Gastrocnemius medialis (tissue), 4 donors: ENCODE measurements at regions of chr2 and their contacts with region 1.

Region 1: DNA sequence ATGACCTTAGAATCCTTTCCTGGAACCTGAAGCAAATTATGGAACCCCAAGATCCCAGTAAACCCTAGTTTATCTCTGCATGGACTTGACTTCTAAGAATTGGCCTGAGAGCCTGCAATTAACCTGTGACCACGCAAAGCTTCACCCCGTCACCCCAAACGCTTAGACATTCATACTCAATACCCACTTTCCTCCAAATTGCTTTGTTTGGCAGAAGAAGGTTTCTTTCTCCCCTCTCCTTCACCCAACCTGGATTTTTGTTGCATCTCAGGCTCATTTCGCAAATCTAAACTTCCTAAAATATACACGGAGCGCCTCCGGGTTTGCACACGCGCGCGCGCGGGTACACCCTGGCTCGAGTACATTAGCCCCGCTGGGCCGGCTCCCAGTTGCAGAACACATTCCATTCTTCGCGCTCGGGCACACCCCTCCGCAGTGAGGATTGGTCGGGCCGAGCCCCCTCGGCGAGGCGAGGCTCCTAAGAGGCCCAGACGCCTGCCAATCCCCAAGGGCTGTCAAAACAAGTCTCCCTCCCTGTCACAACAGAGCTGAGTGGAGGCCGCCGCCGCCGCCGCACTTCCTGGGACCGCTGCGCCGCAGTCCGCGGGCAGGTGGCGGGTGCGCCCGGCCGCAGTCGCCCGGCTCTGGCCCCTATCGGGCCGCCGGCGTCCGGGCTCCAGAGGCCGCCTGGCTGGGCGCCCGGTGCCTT is at the start of gene PLCL1:
- DNase-seq: peak; percentile 94 to 97
- ATAC-seq: peak; percentile 86 to 89
- H3K4me3 ChIP-seq: peak within 1 kb of the TSS; percentile 54 to 93 (median 76)
- H3K27ac ChIP-seq: peak within 1 kb of the TSS; percentile 83 to 91 (median 88)
- H3K4me1 ChIP-seq: peaks cover 55 to 67% of the 10 kb centered on the region in 2 donors
- H3K27me3 ChIP-seq: no peaks in the 10 kb centered on the region
- CTCF ChIP-seq: peak in 4 of 5 experiments; percentile 10 to 27 (median 22)
- POLR2A ChIP-seq: peak; percentile 82 to 94
- total RNA-seq, gene PLCL1: 5.9 to 10.7 (median 9.8) TPM

Region 2: DNA sequence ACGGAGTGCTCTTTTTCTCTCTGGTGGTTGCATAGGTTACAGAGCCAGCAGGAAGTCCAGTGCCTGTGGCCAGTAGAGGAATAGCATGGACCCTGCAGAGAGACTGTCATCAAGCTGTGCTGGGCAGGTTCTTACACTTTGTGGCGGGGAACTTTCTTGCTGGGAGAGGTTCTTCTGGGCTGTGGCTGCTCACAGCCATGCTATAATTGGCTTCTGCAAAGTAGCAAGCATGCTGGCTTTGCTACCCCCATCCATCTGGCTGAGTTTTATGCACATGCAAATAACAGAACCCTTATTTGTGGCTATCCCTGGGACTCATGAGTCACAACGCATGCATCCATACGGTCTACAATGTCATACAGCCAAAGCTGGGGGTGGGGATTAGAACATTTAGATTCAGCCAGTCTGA is 69.1 kb after region 1 on chr2:
- in situ Hi-C with region 1: no loop called
- intact Hi-C with region 1: loop called (anchors 5 kb)
- DNase-seq: no peak
- ATAC-seq: peak; percentile 57 to 77
- H3K4me3 ChIP-seq: no peak overlapping the region
- H3K27ac ChIP-seq: peak overlapping the region in 1 of 4 donors; percentile 45
- H3K4me1 ChIP-seq: peaks cover 25 to 51% of the 10 kb centered on the region in 2 donors
- H3K27me3 ChIP-seq: no peaks in the 10 kb centered on the region
- CTCF ChIP-seq: no peak
- POLR2A ChIP-seq: no peak

Region 3: DNA sequence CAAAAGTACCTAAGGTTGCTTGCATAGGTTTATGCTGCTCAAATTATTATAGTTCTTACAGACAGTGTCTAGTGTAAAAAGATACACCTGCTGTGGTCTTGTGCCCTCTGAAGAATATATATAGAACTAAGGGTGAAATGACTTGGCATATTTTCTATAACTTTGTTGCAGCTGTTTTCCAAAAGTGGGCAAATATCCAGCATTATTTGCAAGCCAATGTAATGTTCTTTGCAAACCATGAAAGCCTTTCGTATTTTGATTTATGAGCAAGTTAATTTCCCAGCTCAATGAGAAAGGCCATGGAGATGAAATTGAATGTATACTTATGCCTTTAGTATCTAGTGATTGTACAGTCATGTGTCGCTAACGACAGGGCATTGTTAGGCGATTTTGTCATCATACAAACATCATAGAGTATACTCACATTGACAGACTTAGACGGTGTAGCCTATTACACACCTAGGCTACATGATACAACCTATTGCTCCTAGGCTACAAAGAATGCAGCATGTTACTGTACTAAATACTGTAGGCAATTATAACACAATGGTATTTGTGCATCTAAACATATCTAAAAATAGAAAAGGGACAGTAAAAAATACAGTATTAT is 116.5 kb after region 1 on chr2:
- in situ Hi-C with region 1: no loop called
- intact Hi-C with region 1: loop called (anchors 5 kb)
- DNase-seq: no peak
- ATAC-seq: peak; percentile 62 to 70
- H3K4me3 ChIP-seq: peak overlapping the region in 1 of 4 donors; percentile 27
- H3K27ac ChIP-seq: peak overlapping the region; percentile 63 to 90 (median 78)
- H3K4me1 ChIP-seq: peaks cover 33 to 51% of the 10 kb centered on the region in 2 donors
- H3K27me3 ChIP-seq: no peaks in the 10 kb centered on the region
- CTCF ChIP-seq: no peak
- POLR2A ChIP-seq: no peak

Region 4: GRCh38 chr2:198053776-198054698 is 249.8 kb after region 1 on chr2:
- in situ Hi-C with region 1: no loop called
- intact Hi-C with region 1: loop called (anchors 10 kb)
- DNase-seq: no peak
- ATAC-seq: peak in 1 of 2 donors; percentile 35
- H3K4me3 ChIP-seq: no peak overlapping the region
- H3K27ac ChIP-seq: peak overlapping the region in 3 of 4 donors; percentile 18 to 53 (median 33)
- H3K4me1 ChIP-seq: peaks cover 9 to 29% of the 10 kb centered on the region in 2 donors
- H3K27me3 ChIP-seq: no peaks in the 10 kb centered on the region
- CTCF ChIP-seq: peak in 3 of 5 experiments; percentile 5 to 35 (median 34)
- POLR2A ChIP-seq: no peak

Region 5: DNA sequence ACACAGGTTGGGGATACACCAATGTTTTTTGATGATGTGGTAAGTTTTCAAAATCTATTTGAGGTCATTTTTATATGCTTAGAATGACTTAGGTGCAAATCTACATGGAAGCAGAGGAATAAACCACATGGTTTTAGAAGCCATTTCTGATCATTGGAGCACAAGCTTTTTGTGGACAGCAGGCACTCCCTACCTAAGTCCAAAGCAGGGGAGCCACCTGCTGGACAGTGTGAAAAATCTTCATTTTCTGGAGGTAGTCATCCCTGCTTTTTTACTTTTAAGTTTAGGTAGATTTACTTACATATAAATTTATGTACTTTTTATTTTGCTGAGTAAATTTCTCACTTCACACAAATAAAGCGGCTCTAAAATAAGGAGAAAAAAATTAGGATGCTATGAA is 323.4 kb after region 1 on chr2:
- in situ Hi-C with region 1: loop called in 3 of 4 experiments (anchors 5 to 10 kb)
- intact Hi-C with region 1: loop called (anchors 1 kb)
- DNase-seq: peak; percentile 28 to 37
- ATAC-seq: peak; percentile 69 to 87
- H3K4me3 ChIP-seq: no peak overlapping the region
- H3K27ac ChIP-seq: no peak overlapping the region
- H3K4me1 ChIP-seq: peaks cover 6 to 17% of the 10 kb centered on the region in 2 donors
- H3K27me3 ChIP-seq: no peaks in the 10 kb centered on the region
- CTCF ChIP-seq: peak; percentile 64 to 80 (median 71)
- POLR2A ChIP-seq: no peak

Region 6: DNA sequence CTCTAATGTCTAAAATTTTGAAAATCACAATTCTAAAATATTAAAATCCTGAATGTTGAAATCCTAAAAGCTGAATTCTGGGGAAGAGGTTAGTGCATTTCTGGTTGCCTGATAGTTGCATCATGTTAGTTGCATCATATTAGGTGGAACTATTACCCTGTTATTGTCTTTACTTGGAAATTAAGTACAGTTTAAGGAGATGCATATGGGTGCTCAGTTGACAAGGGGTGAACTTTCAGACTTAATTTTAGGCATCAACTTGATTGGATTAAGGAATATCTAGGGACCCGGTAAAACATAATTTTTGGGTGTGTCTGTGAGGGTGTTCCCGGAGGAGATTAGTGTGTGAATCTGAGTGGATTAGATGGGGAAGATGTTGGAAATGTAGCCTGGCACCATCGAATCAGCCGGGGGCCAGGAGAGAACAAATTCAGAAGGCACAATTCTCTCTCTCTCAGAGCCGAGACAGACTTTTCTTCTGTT is 410.0 kb after region 1 on chr2:
- in situ Hi-C with region 1: no loop called
- intact Hi-C with region 1: no loop called
- DNase-seq: no peak
- ATAC-seq: no peak
- H3K4me3 ChIP-seq: no peak overlapping the region
- H3K27ac ChIP-seq: no peak overlapping the region
- H3K4me1 ChIP-seq: no peaks in the 10 kb centered on the region
- H3K27me3 ChIP-seq: no peaks in the 10 kb centered on the region
- CTCF ChIP-seq: no peak
- POLR2A ChIP-seq: no peak

Region 7: DNA sequence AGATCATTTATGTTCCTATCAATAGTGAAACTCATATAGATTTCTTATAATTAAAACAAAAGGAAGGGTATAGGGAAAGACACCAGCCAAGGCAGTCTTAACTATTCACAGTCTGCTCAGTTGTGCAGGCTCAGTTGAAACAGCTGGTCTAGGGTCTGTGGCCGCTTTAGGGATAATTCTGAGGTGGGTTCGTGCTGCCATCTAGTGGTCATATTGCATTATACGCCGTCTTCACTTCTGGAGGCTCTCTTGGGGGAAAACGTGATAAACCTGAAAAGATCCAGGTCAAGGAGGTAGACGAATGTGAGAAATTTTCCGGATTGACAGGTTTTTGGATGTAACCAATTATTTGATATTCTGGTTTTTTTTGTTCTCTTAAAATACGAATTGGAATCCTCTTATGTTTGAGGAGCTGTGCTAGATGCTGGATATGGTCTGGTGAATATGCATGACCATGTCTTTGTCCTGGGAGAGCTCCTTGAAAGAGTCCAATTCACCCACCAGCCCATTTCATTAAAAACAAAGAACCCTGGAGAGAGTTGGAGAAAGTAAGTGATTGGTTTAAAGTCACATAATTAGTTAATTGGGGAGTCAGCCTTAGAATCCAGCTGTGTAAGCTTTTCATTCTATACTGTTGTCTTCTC is 492.6 kb after region 1 on chr2:
- in situ Hi-C with region 1: loop called (anchors 5 to 25 kb)
- intact Hi-C with region 1: loop called (anchors 1 kb)
- DNase-seq: peak in 1 of 2 donors; percentile 15
- ATAC-seq: peak; percentile 58 to 80
- H3K4me3 ChIP-seq: peak overlapping the region in 1 of 4 donors; percentile 17
- H3K27ac ChIP-seq: no peak overlapping the region
- H3K4me1 ChIP-seq: no peaks in the 10 kb centered on the region
- H3K27me3 ChIP-seq: no peaks in the 10 kb centered on the region
- CTCF ChIP-seq: peak; percentile 53 to 86 (median 70)
- POLR2A ChIP-seq: no peak

Region 8: DNA sequence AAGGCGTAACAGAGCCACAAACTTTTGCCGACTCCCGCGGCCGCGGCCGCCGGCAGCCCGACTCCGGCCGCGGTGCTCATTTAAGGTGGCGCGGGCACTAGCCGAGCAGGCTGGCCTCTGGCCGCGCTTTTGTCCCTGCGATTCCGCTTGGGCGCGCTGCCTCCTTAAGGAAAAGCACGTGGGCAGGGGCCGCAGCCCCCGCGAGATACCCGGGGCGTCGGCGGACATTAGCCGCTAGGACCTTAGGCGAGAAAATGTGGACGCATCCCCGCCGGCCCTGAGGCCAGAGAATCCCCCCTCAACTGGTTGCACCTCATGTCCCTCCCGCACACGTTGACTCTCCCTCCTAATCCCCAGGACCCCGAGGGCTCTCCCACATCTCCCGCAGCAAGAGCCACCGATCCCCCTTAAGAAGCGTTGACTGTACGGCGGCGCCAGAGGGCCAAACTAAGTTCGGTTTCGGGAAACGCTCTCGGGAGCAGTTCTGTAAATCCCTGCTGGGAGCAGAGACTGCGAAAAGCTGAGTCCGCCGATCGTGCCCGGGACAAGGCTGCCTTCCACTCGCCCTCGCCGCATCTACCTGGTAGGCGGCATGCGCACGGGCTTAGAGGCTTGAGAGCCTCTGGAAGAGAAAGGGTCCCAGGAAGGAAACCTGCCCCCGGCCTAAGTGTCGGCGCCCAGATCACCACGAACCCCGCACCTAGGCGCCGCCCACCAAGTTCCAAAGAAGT is 1655.2 kb after region 1 on chr2:
- in situ Hi-C with region 1: no loop called
- intact Hi-C with region 1: loop called (anchors 10 kb)
- DNase-seq: peak; percentile 70 to 86
- ATAC-seq: peak; percentile 79 to 80
- H3K4me3 ChIP-seq: peak overlapping the region; percentile 85 to 96 (median 90)
- H3K27ac ChIP-seq: peak overlapping the region; percentile 77 to 86 (median 84)
- H3K4me1 ChIP-seq: peaks cover 24 to 54% of the 10 kb centered on the region in 2 donors
- H3K27me3 ChIP-seq: peaks cover 73 to 77% (median 74%) of the 10 kb centered on the region in 3 donors
- CTCF ChIP-seq: peak in 2 of 5 experiments; percentile 25 to 47
- POLR2A ChIP-seq: peak in 1 of 2 donors; percentile 54